GM23248 (cell line): ENCODE measurements at regions of chr6 and their contacts with region 1.

Region 1: DNA sequence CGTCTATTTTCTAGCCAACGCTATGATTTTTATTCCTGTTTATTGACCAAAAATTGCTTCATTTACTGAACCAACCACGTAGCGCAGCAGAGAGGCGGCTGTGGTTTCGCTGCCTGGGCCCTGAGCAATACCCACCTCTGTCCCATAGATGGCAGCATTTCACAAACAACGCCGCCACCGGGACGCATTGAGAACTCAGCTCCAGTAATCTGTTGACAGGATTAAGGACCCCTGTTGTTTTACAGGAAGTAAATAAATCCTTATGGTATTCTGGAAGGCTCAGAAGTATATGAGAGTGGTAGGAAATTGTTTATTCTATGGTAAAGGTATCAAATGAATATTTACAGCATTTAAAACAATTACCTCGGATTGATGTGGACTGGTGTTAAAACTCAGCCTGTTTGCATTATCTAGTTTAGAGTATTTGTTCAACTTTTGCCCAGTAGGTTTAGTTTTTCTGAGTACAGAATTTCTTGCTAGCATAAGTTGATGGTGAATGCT is 547.9 kb upstream of the SLC35B3 start:
- DNase-seq: peak; percentile 84
- H3K4me3 ChIP-seq: peak overlapping the region; percentile 60
- H3K27ac ChIP-seq: no peak overlapping the region
- H3K4me1 ChIP-seq: peaks cover 10% of the 10 kb centered on the region; the same call in 1 of the 2 replicates
- H3K27me3 ChIP-seq: no peaks in the 10 kb centered on the region

Region 2: DNA sequence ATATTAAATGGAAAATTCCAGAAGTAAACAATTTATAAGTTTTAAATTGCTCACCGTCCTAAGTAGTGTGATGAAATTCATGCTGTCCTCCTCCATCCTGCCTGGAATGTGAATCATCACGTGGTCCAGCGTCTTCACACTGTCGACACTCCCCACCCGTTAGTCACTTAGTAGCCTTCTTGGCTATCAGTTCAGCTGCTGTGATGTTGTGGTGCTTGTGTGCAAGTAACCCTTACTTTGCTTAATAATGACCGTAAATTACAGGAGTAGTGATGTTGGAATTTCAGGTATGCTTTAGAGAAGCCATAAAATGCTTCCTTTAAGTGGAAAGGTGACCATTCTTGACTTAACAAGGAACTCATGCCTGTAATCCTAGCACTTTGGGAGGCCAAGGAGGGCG is 1568.4 kb before region 1 on chr6:
- in situ Hi-C with region 1: no loop called
- DNase-seq: peak; percentile 94
- H3K4me3 ChIP-seq: no peak overlapping the region
- H3K27ac ChIP-seq: peak overlapping the region; percentile 63
- H3K4me1 ChIP-seq: peaks cover 19% of the 10 kb centered on the region
- H3K27me3 ChIP-seq: no peaks in the 10 kb centered on the region

Region 3: GRCh38 chr6:9116026-9116425 is 132.8 kb after region 1 on chr6:
- in situ Hi-C with region 1: no loop called
- DNase-seq: peak; percentile 78
- H3K4me3 ChIP-seq: peak overlapping the region; percentile 45
- H3K27ac ChIP-seq: peak overlapping the region; percentile 10; the same call in 1 of the 2 replicates
- H3K4me1 ChIP-seq: peaks cover 12% of the 10 kb centered on the region
- H3K27me3 ChIP-seq: no peaks in the 10 kb centered on the region

Region 4: DNA sequence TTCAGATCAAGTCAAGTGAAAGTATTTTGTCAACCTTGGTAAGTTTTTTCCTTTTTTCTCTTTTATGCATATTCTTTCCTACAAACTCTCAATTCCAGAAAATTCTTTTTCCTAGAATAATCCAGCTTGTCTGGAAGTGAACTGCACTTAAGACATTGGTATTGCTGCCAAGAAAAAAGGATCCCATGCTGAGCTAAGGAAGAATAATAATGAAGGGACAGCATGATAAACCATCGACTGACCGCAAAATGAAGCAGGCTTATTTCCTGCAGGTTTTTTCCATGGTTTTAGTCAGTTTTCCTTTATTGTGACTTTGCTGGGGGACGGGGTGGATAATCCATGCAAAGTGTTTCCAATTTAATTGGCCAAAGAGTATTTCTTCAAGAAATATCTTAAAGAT is 309.7 kb after region 1 on chr6:
- in situ Hi-C with region 1: no loop called
- DNase-seq: no peak
- H3K4me3 ChIP-seq: no peak overlapping the region
- H3K27ac ChIP-seq: no peak overlapping the region
- H3K4me1 ChIP-seq: no peaks in the 10 kb centered on the region; the same call in 1 of the 2 replicates
- H3K27me3 ChIP-seq: no peaks in the 10 kb centered on the region

Region 5: GRCh38 chr6:9540534-9541126 is 557.4 kb after region 1 on chr6:
- in situ Hi-C with region 1: loop called (anchors 25 kb)
- DNase-seq: peak; percentile 77
- H3K4me3 ChIP-seq: no peak overlapping the region
- H3K27ac ChIP-seq: no peak overlapping the region
- H3K4me1 ChIP-seq: peaks cover 29% of the 10 kb centered on the region
- H3K27me3 ChIP-seq: no peaks in the 10 kb centered on the region

Region 6: DNA sequence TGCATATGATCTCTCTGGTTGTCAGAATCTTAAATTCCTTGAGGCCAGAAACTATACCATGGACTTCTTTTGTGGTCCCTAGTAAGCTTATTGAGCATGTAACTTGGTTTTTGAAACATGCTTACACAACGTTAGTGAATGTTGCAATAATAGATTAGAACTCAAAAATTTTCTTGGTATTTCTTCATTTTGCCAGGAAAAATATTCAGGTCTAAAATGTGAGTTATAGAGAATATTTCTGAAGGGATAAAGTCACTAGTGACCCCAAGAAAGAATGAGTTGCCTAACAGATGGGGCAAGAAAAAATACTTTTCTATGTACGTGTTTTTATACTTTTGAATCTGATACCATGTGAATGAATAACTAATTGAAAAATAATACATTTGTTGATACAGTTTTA is 1236.3 kb after region 1 on chr6:
- in situ Hi-C with region 1: no loop called
- DNase-seq: no peak
- H3K4me3 ChIP-seq: no peak overlapping the region
- H3K27ac ChIP-seq: no peak overlapping the region
- H3K4me1 ChIP-seq: no peaks in the 10 kb centered on the region
- H3K27me3 ChIP-seq: no peaks in the 10 kb centered on the region

Region 7: DNA sequence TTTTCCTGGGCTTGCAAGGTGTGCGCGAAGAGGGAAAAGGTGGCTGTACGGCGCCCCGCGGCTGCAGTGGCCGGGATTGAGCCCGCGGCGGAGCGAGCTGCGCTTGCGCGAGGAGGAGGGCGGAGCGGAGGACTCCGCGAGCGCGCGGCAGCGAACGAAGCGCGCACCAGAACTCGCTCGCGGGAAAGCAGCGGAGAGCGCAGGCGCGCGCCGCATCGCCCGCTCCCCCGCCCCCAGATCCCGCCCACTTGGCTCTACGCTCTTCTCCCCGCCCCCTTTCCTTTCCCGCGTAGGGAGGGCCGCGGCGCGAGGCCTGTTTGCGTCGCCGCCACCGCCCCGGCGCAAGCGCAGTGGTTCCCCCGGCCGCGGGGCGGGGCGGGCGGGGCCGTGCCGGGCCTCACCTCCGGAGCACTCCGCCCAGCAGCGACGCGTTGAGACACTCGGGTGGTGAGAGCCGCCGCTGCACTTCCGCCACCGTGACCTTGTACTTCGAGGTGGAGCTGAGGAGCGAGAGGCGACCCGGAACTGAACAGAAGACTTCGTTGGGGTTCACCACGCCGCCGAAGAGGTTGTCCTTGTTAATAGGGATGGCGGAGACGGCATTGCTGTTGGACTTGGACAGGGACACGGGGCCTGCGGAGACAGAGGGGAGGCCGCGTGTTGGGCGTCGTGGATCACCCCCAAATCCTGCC is 1421.0 kb after region 1 on chr6:
- in situ Hi-C with region 1: loop called (anchors 25 kb)
- DNase-seq: peak; percentile 98
- H3K4me3 ChIP-seq: peak overlapping the region; percentile 79
- H3K27ac ChIP-seq: peak overlapping the region; percentile 72
- H3K4me1 ChIP-seq: peaks cover 7% of the 10 kb centered on the region
- H3K27me3 ChIP-seq: 0 out of 2 replicates have a peak, but pooled peaks cover 3% of the 10 kb centered on the region